Heart right ventricle (tissue), 16 donors: ENCODE measurements at regions of chr16 and their contacts with region 1.

Region 1: GRCh38 chr16:50806099-50807062 is 64.5 kb downstream of the CYLD start:
- DNase-seq: peak; percentile 67 to 85
- ATAC-seq: peak; percentile 90 to 95 (median 94)
- H3K4me3 ChIP-seq: peak overlapping the region in 9 of 10 donors; percentile 4 to 50 (median 41)
- H3K27ac ChIP-seq: peak overlapping the region in 8 of 10 donors; percentile 5 to 61 (median 29)
- H3K4me1 ChIP-seq: peaks cover 0 to 13% (median 6%) of the 10 kb centered on the region in 9 donors
- H3K27me3 ChIP-seq: no peaks in the 10 kb centered on the region
- CTCF ChIP-seq: peak; percentile 85 to 97 (median 92)

Region 2: DNA sequence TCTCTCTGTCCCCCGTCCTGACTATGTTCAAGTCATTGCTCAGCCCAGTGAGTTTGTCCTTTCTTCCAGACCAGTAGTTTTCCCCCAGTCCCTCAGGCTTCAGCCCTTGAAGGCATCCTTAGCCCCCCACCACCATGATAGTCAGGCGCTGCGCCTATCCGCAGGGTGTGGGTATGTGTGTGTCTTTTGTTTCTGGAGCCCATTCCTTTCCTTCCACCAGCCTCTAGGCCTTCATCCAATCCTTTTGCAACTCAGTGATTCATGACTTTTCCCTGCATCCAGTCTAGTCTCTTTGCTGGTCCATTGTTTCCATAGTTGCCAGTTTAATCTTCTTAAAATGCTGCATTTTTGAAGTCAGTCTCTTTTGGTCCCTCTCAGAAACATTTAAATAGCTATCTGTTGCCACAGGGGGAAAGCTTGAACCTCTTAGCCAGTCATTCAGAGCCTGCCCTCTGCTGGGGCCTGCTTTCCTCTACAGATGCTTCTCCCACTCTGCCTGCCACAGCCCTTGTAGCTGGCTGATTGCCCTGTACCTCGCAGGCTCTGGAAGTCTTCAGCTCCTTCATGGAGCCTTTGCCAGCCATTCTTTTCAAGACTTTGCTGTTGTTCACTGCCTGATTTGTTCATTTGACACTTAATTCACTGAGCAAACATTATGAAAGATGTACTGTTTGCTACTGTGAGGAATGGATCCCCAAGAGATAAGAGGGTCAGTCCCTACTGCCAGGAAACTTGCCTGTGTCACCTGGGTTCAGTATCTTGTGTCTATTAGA is 595.9 kb before region 1 on chr16:
- intact Hi-C with region 1: loop called in 2 of 10 experiments (anchors 10 kb)
- DNase-seq: peak; percentile 72 to 82
- ATAC-seq: peak; percentile 86 to 95 (median 92)
- H3K4me3 ChIP-seq: no peak overlapping the region
- H3K27ac ChIP-seq: peak overlapping the region in 2 of 10 donors; percentile 9 to 39
- H3K4me1 ChIP-seq: peaks cover 7 to 51% (median 33%) of the 10 kb centered on the region in 9 donors
- H3K27me3 ChIP-seq: no peaks in the 10 kb centered on the region
- CTCF ChIP-seq: peak; percentile 41 to 90 (median 74)

Region 3: DNA sequence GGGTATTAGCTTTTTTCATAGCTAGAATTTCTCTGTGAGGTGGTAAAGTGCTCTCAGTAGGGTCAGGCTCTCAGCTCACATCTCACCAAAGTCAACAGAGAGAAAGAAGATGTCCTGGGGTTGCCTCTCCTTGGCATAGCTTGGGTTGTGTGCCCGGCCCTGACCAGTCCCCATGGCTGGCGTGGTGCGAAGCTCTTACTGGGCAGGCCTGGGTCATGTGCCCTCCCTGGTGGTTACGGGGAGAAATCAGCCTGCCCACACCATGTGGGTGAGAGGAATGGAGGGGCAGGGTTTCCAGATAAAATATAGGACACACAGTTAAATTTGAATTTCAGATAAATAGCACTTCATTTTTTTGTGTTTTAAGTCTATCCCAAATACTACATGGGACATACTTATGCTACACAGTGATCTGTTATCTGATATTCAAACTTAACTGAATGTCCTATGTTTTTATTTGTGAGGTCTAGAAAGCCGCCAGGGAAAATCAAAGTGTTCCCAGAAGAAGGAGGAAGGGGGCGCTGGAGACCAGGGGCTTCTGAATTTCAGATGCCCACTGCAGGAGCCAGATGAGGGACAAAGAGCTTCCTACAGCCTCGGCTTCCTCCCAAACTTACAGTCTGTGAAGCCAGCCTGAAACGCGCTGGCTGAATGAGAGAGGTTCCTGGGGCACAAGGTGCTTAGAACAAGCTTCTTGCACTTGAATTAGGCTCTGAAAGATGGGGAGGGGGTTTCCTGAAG is 212.8 kb before region 1 on chr16:
- intact Hi-C with region 1: loop called in 3 of 10 experiments (anchors 10 kb)
- DNase-seq: no peak
- ATAC-seq: no peak
- H3K4me3 ChIP-seq: no peak overlapping the region
- H3K27ac ChIP-seq: no peak overlapping the region
- H3K4me1 ChIP-seq: peaks cover 0 to 28% (median 10%) of the 10 kb centered on the region in 9 donors
- H3K27me3 ChIP-seq: no peaks in the 10 kb centered on the region
- CTCF ChIP-seq: peak in 7 of 9 donors; percentile 25 to 54 (median 41)

Region 4: GRCh38 chr16:50671644-50672260 is 134.6 kb before region 1 on chr16:
- intact Hi-C with region 1: loop called in 8 of 10 experiments (anchors 5 to 10 kb)
- DNase-seq: no peak
- ATAC-seq: no peak
- H3K4me3 ChIP-seq: no peak overlapping the region
- H3K27ac ChIP-seq: no peak overlapping the region
- H3K4me1 ChIP-seq: peaks cover 2 to 21% (median 13%) of the 10 kb centered on the region in 9 donors
- H3K27me3 ChIP-seq: peaks cover 0 to 30% (median 21%) of the 10 kb centered on the region in 7 donors
- CTCF ChIP-seq: peak in 8 of 9 donors; percentile 3 to 71 (median 40)

Region 5: GRCh38 chr16:50741808-50742575 is 64.4 kb before region 1 on chr16 and contains the start of gene CYLD:
- intact Hi-C with region 1: loop called in 1 of 10 experiments (anchors 10 kb)
- DNase-seq: peak; percentile 99 to 100
- ATAC-seq: peak; percentile 98 to 100 (median 99)
- H3K4me3 ChIP-seq: peak within 1 kb of the TSS; percentile 48 to 98 (median 93)
- H3K27ac ChIP-seq: peak within 1 kb of the TSS; percentile 75 to 98 (median 90)
- H3K4me1 ChIP-seq: peaks cover 0 to 50% (median 34%) of the 10 kb centered on the region in 9 donors
- H3K27me3 ChIP-seq: no peaks in the 10 kb centered on the region
- CTCF ChIP-seq: no peak
- total RNA-seq, gene CYLD: 21.9 to 61.7 (median 39.9) TPM